Ascending aorta (tissue), 2 donors: ENCODE measurements at regions of chr17 and their contacts with region 1.

Region 1: DNA sequence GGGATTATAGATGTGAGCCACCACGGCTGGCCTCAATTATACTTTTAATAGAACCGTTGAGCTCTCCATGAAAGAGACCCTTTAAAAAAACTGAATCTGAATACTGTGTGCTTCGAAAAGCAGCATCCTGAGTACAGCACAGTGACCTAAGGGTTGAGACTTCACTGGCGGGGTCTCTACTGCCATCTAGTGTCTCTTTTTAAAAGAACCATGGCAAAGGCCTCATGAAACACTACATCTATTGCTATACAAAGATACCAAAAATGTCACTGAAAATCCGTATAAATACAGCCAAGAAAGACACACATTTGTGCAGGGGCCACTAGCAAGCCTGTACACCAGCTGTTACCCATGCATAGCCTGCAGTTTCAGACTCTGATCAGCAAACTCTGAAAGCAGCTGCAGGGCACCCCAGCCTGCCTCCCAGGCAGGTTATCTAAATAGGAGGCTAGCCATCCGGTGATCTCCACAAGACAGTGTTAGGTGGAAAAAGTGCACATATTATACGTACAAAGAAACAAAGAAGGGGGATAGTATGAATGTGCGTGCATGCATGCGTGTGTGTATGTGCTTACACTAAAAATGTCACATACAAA is 35.3 kb downstream of the NPLOC4 start:
- DNase-seq: peak in 1 of 2 donors; percentile 66
- H3K4me3 ChIP-seq: no peak overlapping the region
- H3K27ac ChIP-seq: peak overlapping the region in 1 of 2 donors; percentile 24
- H3K4me1 ChIP-seq: peaks cover 4 to 7% of the 10 kb centered on the region in 2 donors
- H3K27me3 ChIP-seq: no peaks in the 10 kb centered on the region
- CTCF ChIP-seq: peak; percentile 74 to 83 (median 77)

Region 2: DNA sequence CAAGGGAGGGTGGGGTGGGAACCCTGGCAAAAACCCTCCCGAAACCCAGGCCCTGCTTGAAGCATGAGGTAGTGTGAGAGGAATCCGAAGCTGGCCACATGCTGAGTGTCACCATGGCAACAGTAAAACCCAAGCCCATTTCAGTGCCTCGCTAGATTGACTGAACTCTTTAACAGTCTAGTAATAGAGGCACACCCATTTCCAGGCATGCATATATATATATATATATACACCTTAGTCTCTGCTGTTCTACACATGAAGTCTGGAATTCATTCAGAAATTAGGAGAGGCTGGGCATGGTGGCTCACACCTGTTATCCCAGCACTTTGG is 669.7 kb before region 1 on chr17:
- intact Hi-C with region 1: no loop called
- DNase-seq: no peak
- H3K4me3 ChIP-seq: no peak overlapping the region
- H3K27ac ChIP-seq: no peak overlapping the region
- H3K4me1 ChIP-seq: peaks cover 0 to 3% of the 10 kb centered on the region in 2 donors
- H3K27me3 ChIP-seq: no peaks in the 10 kb centered on the region
- CTCF ChIP-seq: no peak

Region 3: DNA sequence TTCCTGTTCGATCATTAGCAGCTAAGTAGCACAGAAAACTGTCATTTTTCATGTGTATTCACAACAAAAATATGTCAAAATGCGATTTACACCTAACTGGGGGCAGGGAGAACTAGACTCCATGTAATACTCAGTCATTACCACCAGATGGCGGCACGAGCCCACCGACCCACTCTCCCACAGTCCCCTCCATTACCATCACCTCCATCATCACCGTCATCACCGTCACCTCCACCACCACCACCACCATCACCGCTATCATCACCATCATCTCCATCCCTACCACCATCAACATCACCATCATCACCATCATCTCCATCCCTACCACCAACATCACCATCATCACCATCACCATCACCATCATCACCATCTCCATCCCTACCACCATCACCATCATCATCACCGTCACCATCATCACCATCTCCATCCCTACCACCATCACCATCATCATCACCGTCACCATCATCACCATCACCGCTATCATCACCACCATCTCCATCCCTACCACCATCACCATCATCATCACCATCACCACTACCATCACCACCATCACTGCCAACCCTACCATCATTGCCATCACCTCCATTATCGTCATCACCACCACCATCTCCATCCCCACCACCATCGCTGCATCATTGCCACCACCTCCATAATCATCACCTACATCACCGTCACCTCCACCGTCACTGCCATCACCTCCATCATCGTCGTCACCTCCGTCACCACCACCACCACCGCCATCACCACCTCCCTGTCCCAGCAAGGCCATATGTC is 348.1 kb before region 1 on chr17:
- intact Hi-C with region 1: loop called (anchors 1 kb)
- DNase-seq: no peak
- H3K4me3 ChIP-seq: no peak overlapping the region
- H3K27ac ChIP-seq: no peak overlapping the region
- H3K4me1 ChIP-seq: peaks cover 0 to 13% of the 10 kb centered on the region in 2 donors
- H3K27me3 ChIP-seq: no peaks in the 10 kb centered on the region
- CTCF ChIP-seq: peak; percentile 75 to 82 (median 76)

Region 4: DNA sequence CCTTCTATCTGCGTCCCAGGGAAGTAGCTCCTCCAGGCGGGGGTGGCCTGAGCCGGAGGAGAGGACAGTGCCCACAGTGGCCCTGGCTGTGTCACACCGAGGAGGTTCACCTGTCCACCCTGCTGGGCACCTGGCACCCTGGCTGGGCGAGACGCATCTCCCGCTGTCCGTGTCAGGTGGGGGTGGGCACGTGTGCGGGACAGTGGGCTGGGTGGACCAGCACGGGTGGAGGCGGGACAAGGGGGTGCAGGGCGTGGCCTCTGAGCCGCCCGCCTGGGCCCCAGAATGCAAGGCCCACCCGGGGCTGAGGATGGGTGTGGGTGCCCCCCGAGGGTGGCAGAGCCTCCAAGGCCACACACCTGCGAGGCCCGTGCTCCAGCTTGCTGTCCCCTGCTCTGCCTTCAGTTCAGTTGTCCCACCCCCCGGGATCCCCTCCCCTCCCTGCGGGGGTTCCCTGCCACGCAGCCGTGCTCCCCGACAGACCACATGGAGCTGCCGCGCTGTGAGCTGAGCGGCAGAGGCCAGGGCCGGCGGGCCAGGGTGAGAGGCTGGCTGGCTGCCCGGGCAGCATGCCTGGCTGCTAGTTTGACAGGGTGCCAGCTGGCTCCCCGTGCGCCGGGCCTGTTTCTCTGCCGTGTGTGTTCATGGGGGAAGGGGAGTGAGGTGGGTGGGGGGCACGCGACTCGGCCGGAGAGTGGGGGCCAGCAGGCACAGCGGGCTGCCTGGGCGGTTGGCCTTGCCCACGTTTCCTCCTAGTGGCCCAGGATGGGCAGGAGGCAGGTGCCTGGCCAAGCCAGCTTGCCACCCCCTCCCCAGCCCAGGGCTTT is 172.5 kb before region 1 on chr17:
- intact Hi-C with region 1: loop called (anchors 5 kb)
- DNase-seq: peak in 1 of 2 donors; percentile 88
- H3K4me3 ChIP-seq: peak overlapping the region; percentile 37 to 50
- H3K27ac ChIP-seq: peak overlapping the region; percentile 70 to 75
- H3K4me1 ChIP-seq: peaks cover 30 to 50% of the 10 kb centered on the region in 2 donors
- H3K27me3 ChIP-seq: no peaks in the 10 kb centered on the region
- CTCF ChIP-seq: no peak

Region 5: DNA sequence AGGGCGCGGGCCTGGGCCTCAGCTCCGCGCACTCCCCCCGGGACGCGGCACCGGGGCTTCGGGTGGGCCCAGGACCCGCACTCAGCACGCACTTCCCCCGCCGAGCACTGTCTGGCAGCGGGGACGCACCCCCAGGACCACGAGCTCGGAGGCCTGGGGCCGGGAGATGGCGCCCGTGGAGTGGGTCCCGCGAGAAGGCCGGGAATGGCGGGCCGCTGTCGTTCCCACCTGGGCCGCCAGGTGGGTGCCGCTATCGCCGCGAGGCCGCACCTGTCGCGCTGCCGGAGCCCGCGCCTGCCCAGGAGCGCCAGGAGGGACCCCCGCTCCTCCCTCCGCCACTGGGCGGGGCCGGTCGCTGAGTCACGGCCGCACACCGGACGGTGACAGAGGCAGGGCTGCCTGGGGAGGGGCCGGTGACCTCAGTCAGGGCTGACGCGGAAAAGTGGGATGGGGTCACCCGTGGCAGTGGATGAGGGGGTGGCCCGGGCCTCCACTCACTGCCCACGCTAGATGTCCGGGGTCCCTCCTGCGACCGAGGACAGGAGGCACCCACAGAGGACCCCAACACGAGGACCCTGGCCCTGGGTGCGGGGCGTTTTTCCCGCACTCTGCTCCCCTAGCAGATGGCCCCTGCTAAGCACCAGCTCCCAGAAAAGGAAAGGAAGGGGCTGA is 82.2 kb before region 1 on chr17:
- intact Hi-C with region 1: loop called (anchors 2 kb)
- DNase-seq: peak in 1 of 2 donors; percentile 77
- H3K4me3 ChIP-seq: peak overlapping the region; percentile 65 to 96
- H3K27ac ChIP-seq: peak overlapping the region; percentile 95 to 100
- H3K4me1 ChIP-seq: peaks cover 21 to 47% of the 10 kb centered on the region in 2 donors
- H3K27me3 ChIP-seq: no peaks in the 10 kb centered on the region
- CTCF ChIP-seq: peak; percentile 25 to 58 (median 44)

Region 6: GRCh38 chr17:81553018-81553615 is 48.5 kb before region 1 on chr17:
- intact Hi-C with region 1: loop called (anchors 1 kb)
- DNase-seq: peak; percentile 59 to 90
- H3K4me3 ChIP-seq: peak overlapping the region; percentile 81 to 83
- H3K27ac ChIP-seq: peak overlapping the region; percentile 75 to 93
- H3K4me1 ChIP-seq: peaks cover 17 to 34% of the 10 kb centered on the region in 2 donors
- H3K27me3 ChIP-seq: no peaks in the 10 kb centered on the region
- CTCF ChIP-seq: no peak